CD4-positive, alpha-beta memory T cell (primary cell): ENCODE measurements at regions of chr1 and their contacts with region 1.

Region 1: GRCh38 chr1:111725192-111725591 is 14.0 kb downstream of the INKA2 start:
- DNase-seq: no peak
- H3K4me3 ChIP-seq: no peak overlapping the region
- H3K4me3 Mint-ChIP-seq: no peak overlapping the region
- H3K27ac ChIP-seq: no peak overlapping the region
- H3K27ac Mint-ChIP-seq: peak overlapping the region in 6 of 7 donors; percentile 29 to 97 (median 92)
- H3K4me1 ChIP-seq: peaks cover 22% of the 10 kb centered on the region
- H3K4me1 Mint-ChIP-seq: peaks cover 20 to 39% (median 29%) of the 10 kb centered on the region in 4 donors
- H3K27me3 ChIP-seq: no peaks in the 10 kb centered on the region
- H3K27me3 Mint-ChIP-seq: no peaks in the 10 kb centered on the region

Region 2: DNA sequence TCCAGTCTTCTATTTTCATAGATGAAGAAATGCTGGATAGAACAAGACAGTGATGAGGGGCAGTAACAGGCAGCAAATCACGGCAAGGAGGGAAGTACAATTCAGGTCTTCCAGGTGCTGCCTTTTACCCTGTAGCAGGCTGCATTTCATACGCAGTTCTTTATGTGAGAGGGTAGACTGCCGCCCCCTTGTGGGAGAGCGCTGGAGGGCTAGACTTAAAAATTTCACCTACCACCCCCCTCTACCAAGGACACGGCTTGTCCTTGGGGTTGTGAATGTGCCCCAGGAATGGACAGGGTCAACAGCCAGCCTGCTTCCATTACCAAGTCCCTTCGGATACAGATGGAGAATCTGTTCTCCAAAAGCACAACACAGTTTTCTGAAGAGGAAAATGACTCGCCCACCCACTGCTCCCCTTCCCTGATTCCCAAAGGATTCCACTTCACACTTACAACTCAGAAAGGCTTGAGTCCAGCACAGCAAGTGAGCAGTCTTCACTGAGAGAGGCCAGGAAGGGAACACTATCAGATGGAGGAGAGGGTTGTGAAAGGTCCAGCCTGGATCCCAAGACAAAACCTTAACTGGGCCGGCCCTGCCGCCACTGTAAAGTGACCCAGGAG is 283.5 kb before region 1 on chr1:
- CTCF ChIA-PET with region 1: no interaction called
- POLR2A ChIA-PET with region 1: no interaction called
- intact Hi-C with region 1: no loop called
- DNase-seq: peak; percentile 62 to 72 (median 64)
- H3K4me3 ChIP-seq: no peak overlapping the region
- H3K4me3 Mint-ChIP-seq: no peak overlapping the region
- H3K27ac ChIP-seq: peak overlapping the region; percentile 12
- H3K27ac Mint-ChIP-seq: peak overlapping the region; percentile 68 to 82 (median 77)
- H3K4me1 ChIP-seq: peaks cover 26% of the 10 kb centered on the region
- H3K4me1 Mint-ChIP-seq: peaks cover 16 to 44% (median 27%) of the 10 kb centered on the region in 4 donors
- H3K27me3 ChIP-seq: no peaks in the 10 kb centered on the region
- H3K27me3 Mint-ChIP-seq: no peaks in the 10 kb centered on the region

Region 3: DNA sequence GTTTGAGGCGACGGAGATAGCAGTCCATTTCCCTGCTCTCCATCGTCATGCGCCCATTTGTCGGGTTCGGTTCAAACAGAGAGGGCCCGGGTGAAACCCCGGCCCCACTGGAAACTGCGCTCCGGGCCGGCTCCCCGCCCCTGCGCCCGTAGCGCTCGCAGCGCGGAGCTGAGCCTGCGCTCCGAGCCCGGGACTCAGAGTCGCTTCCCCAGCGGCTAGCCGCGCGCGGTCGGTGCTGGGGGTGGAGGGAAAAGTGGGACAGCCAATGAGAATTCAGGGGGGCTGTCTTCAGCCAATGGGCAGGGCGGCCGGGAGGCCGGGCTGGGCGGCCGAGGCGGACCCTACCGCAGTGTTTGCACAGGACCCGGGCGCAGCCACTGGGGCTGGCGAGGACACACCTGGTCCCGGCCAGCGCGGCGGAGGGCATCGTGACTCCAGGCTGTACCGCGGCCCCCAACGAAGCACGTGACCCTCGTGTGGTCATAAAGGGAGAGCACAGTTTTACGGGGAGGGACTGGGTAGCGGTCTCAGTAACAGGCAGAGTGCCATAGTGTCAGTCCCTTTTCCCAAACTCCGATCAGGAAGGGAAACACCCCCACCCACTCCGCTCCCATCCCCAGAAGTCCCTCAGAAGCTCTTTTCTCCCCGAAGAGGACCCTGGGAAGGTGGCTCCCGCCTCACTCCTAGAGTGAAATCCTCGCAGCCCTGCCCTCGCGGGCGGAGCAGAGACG is 14.2 kb after region 1 on chr1 and contains the start of gene INKA2:
- CTCF ChIA-PET with region 1: interaction called, 3 read pairs
- POLR2A ChIA-PET with region 1: interaction called, 19 read pairs
- intact Hi-C with region 1: loop called (anchors 2 kb)
- DNase-seq: peak; percentile 44 to 64 (median 48)
- H3K4me3 ChIP-seq: peak within 1 kb of the TSS; percentile 68 to 70
- H3K4me3 Mint-ChIP-seq: peak within 1 kb of the TSS; percentile 83 to 93 (median 89)
- H3K27ac ChIP-seq: peak within 1 kb of the TSS; percentile 37
- H3K27ac Mint-ChIP-seq: peak within 1 kb of the TSS; percentile 42 to 96 (median 86)
- H3K4me1 ChIP-seq: peaks cover 28% of the 10 kb centered on the region
- H3K4me1 Mint-ChIP-seq: peaks cover 10 to 27% (median 17%) of the 10 kb centered on the region in 4 donors
- H3K27me3 ChIP-seq: peaks cover 18% of the 10 kb centered on the region
- H3K27me3 Mint-ChIP-seq: peaks cover 6 to 18% of the 10 kb centered on the region in 2 donors
- total RNA-seq, gene INKA2: 2.2 to 2.4 TPM